Caco-2 (cell line): ENCODE measurements at regions of chr4 and their contacts with region 1.

Region 1: DNA sequence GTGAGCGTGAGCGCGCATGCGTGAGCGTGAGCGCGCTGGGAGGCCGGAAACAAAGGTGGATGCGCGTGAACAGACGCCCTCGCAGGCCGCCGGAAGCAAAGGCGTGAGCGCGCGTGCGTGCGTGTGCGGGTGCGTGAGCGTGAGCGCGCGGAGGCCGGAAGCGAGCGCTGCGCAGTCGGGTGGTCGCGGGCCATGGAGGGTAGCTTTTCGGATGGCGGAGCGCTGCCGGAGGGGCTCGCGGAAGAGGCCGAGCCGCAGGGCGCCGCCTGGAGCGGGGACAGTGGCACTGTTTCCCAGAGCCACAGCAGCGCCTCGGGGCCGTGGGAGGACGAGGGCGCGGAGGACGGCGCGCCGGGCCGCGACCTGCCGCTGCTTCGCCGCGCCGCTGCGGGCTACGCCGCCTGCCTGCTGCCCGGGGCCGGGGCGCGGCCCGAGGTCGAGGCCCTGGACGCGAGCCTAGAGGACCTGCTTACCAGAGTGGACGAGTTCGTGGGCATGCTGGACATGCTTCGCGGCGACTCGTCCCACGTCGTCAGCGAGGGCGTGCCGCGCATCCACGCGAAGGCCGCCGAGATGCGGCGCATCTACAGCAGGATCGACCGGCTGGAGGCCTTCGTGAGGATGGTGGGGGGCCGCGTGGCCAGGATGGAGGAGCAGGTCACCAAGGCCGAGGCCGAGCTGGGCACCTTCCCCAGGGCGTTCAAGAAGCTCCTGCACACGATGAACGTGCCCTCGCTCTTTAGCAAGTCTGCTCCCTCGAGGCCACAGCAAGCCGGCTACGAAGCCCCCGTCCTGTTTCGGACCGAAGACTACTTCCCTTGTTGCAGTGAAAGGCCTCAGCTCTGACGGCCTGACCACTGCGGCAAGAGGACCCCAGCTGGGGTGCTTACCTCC is at the start of gene BLOC1S4:
- DNase-seq: peak; percentile 85 to 88
- H3K4me3 ChIP-seq: peak within 1 kb of the TSS; percentile 83
- H3K4me3 Mint-ChIP-seq: peak within 1 kb of the TSS; percentile 96
- H3K27ac Mint-ChIP-seq: peak within 1 kb of the TSS; percentile 91
- H3K4me1 ChIP-seq: peaks cover 3% of the 10 kb centered on the region; the same call in 1 of the 2 replicates
- H3K4me1 Mint-ChIP-seq: no peaks in the 10 kb centered on the region
- H3K27me3 ChIP-seq: no peaks in the 10 kb centered on the region
- H3K27me3 Mint-ChIP-seq: no peaks in the 10 kb centered on the region
- CTCF ChIP-seq: no peak
- total RNA-seq, gene BLOC1S4: 16.6 and 17.2 TPM in 2 replicates

Region 2: GRCh38 chr4:6640292-6641163 is 75.7 kb before region 1 on chr4 and contains the start of gene MRFAP1:
- CTCF ChIA-PET with region 1: interaction called, 3 read pairs
- POLR2A ChIA-PET with region 1: no interaction called
- intact Hi-C with region 1: loop called (anchors 2 kb)
- DNase-seq: peak; percentile 92 to 94
- H3K4me3 ChIP-seq: peak within 1 kb of the TSS; percentile 79
- H3K4me3 Mint-ChIP-seq: peak within 1 kb of the TSS; percentile 99
- H3K27ac Mint-ChIP-seq: peak within 1 kb of the TSS; percentile 99
- H3K4me1 ChIP-seq: peaks cover 4% of the 10 kb centered on the region; the same call in 1 of the 2 replicates
- H3K4me1 Mint-ChIP-seq: peaks cover 12% of the 10 kb centered on the region
- H3K27me3 ChIP-seq: no peaks in the 10 kb centered on the region
- H3K27me3 Mint-ChIP-seq: no peaks in the 10 kb centered on the region
- CTCF ChIP-seq: no peak
- total RNA-seq, gene MRFAP1: 245 and 254 TPM in 2 replicates

Region 3: GRCh38 chr4:6673660-6674499 is 42.4 kb before region 1 on chr4:
- CTCF ChIA-PET with region 1: interaction called, 3 read pairs
- POLR2A ChIA-PET with region 1: no interaction called
- intact Hi-C with region 1: loop called (anchors 1 kb)
- DNase-seq: peak; percentile 94 to 95
- H3K4me3 ChIP-seq: peak overlapping the region; percentile 89
- H3K4me3 Mint-ChIP-seq: peak overlapping the region; percentile 84
- H3K27ac Mint-ChIP-seq: peak overlapping the region; percentile 93
- H3K4me1 ChIP-seq: peaks cover 16% of the 10 kb centered on the region
- H3K4me1 Mint-ChIP-seq: peaks cover 18% of the 10 kb centered on the region
- H3K27me3 ChIP-seq: no peaks in the 10 kb centered on the region
- H3K27me3 Mint-ChIP-seq: no peaks in the 10 kb centered on the region
- CTCF ChIP-seq: no peak

Region 4: DNA sequence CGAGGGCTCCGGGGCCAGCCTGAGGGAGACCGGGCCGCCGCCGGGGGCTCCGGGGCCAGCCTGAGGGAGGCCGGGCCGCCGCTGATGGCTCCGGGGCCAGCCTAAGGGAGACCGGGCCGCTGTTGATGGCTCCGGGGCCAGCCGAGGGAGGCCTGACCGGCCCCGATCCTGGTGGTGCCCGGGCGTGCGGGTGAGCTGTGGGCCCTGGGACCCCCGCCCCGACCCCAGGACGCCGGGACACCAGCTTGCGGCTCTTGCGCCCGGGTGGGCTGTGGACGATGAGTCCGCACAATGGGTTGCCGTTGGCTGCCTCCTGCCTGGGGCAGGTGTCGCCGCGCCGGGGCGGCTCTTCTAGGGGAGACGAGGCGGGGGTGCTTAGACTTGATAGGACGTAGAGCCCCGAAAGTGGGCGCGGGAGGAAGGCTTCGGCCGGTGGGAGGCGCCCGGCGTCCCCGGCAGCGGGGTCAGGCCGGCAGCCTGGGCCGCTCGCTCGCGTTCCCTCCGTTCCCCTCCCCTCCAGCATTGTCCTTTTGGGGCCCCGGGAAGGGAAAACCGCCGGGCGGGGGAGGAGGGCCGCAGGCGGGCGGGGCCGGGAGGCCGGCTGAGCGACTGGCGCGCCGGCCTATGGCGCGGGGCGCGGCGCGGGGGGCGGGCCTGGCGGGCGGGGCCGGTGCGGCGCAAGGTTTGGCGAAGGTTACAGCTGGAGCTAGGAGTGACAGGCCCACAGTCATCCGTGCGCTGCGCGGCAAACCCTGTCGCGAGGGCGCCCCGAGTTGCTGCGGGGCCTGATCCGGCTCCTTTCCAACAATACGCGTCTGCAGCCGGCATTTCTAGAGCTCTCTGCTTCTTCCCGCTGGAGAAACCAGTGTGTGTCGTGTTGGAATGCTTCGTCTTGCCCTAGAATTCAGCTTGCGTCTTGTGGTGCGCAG is 67.1 kb after region 1 on chr4:
- CTCF ChIA-PET with region 1: interaction called, 4 read pairs
- POLR2A ChIA-PET with region 1: no interaction called
- intact Hi-C with region 1: loop called (anchors 5 kb)
- DNase-seq: peak; percentile 90 to 94
- H3K4me3 ChIP-seq: peak overlapping the region; percentile 97
- H3K4me3 Mint-ChIP-seq: peak overlapping the region; percentile 75
- H3K27ac Mint-ChIP-seq: peak overlapping the region; percentile 72
- H3K4me1 ChIP-seq: no peaks in the 10 kb centered on the region
- H3K4me1 Mint-ChIP-seq: peaks cover 19% of the 10 kb centered on the region
- H3K27me3 ChIP-seq: no peaks in the 10 kb centered on the region
- H3K27me3 Mint-ChIP-seq: no peaks in the 10 kb centered on the region
- CTCF ChIP-seq: peak in 1 of 2 experiments; percentile 29

Region 5: GRCh38 chr4:6873792-6874461 is 157.7 kb after region 1 on chr4:
- CTCF ChIA-PET with region 1: interaction called, 50 read pairs
- POLR2A ChIA-PET with region 1: no interaction called
- intact Hi-C with region 1: loop called (anchors 1 kb)
- DNase-seq: peak; percentile 57 to 68
- H3K4me3 ChIP-seq: no peak overlapping the region
- H3K4me3 Mint-ChIP-seq: no peak overlapping the region
- H3K27ac Mint-ChIP-seq: no peak overlapping the region
- H3K4me1 ChIP-seq: no peaks in the 10 kb centered on the region
- H3K4me1 Mint-ChIP-seq: no peaks in the 10 kb centered on the region
- H3K27me3 ChIP-seq: no peaks in the 10 kb centered on the region
- H3K27me3 Mint-ChIP-seq: no peaks in the 10 kb centered on the region
- CTCF ChIP-seq: peak; percentile 74 to 77

Region 6: DNA sequence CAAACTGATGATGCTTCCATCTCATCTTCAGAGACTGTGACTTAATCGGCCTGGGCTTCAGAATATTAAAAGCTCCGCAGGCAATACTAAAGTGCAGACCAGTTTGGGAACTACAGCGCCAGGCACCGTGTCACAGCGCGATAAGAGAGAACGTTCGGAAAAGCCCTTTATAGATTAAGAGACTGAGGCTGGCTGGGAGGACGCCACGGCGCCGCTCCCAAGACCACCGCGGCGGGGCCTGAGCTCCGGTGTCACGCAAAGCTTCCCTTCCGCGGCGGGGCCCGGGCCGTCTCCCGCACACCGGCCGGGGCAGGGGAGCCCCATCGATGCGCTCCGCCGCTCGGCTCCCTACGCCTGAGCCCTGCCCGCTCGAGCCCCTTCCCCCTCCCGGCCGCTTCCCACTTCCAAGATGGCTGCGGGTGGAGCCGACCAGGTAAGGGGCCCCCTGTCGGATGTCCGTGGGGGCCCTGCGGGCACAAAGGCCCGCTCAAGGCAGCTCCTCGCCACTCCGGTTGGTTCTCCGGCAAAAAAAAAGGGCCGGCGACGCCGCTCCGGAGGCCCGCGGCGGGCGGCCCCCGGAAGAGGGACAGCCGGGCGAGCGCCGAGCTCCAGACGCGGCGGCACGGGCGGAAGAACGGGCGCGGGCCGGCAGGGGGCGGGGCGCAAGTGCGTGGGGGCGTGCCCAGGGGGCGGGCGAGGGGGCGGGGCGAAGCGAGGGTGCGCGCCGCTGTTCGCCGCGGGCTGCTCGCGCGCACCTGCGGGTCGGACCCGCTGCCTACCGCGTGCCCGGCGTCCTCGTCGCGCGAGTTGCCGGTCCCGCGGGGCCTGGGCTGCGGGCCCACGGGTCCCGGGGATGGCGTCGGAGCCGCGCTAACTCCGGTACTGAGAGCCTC is 193.1 kb after region 1 on chr4 and contains the start of gene TBC1D14:
- CTCF ChIA-PET with region 1: interaction called, 3 read pairs
- POLR2A ChIA-PET with region 1: interaction called, 10 read pairs
- intact Hi-C with region 1: no loop called
- DNase-seq: peak; percentile 90
- H3K4me3 ChIP-seq: peak within 1 kb of the TSS; percentile 83
- H3K4me3 Mint-ChIP-seq: peak within 1 kb of the TSS; percentile 94
- H3K27ac Mint-ChIP-seq: peak within 1 kb of the TSS; percentile 89
- H3K4me1 ChIP-seq: peaks cover 23% of the 10 kb centered on the region
- H3K4me1 Mint-ChIP-seq: peaks cover 27% of the 10 kb centered on the region
- H3K27me3 ChIP-seq: no peaks in the 10 kb centered on the region
- H3K27me3 Mint-ChIP-seq: no peaks in the 10 kb centered on the region
- CTCF ChIP-seq: peak in 1 of 2 experiments; percentile 16
- total RNA-seq, gene TBC1D14: 54.0 and 57.6 TPM in 2 replicates

Region 7: GRCh38 chr4:7081891-7082471 is 365.7 kb after region 1 on chr4:
- CTCF ChIA-PET with region 1: interaction called, 4 read pairs
- POLR2A ChIA-PET with region 1: no interaction called
- intact Hi-C with region 1: loop called (anchors 5 kb)
- DNase-seq: peak; percentile 76 to 78
- H3K4me3 ChIP-seq: no peak overlapping the region
- H3K4me3 Mint-ChIP-seq: no peak overlapping the region
- H3K27ac Mint-ChIP-seq: no peak overlapping the region
- H3K4me1 ChIP-seq: no peaks in the 10 kb centered on the region
- H3K4me1 Mint-ChIP-seq: peaks cover 11% of the 10 kb centered on the region
- H3K27me3 ChIP-seq: no peaks in the 10 kb centered on the region
- H3K27me3 Mint-ChIP-seq: no peaks in the 10 kb centered on the region
- CTCF ChIP-seq: peak; percentile 62 to 73